GM10248 (cell line): ENCODE measurements at regions of chr1 and their contacts with region 1.

Region 1: GRCh38 chr1:85661767-85662166 is 46.5 kb downstream of the ZNHIT6 start:
- DNase-seq: no peak
- CTCF ChIP-seq: peak; percentile 8

Region 2: DNA sequence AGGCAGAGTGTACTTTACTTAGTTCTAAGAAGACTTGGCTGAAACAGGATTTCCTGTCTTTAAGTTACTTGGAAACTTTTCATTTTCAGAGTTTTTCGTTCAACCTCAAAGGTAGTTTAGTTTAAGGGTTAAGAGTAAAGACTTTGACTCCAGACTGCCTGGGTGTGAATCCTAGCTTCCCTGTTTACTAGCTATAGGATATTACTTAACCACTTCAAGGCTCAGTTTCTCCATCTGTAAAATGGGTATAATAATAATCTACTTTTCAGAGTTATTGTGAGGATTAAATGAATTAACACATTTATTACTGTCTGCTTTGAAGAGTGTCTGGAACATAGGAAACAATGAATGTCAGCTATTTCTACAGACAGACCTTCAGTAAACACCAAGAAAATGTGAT is 16.4 kb after region 1 on chr1:
- CTCF ChIA-PET with region 1: interaction called, 11 read pairs
- POLR2A ChIA-PET with region 1: no interaction called
- DNase-seq: no peak
- CTCF ChIP-seq: no peak